ENCODE measurements at regions of chr2 and their contacts with region 1.

Region 1: DNA sequence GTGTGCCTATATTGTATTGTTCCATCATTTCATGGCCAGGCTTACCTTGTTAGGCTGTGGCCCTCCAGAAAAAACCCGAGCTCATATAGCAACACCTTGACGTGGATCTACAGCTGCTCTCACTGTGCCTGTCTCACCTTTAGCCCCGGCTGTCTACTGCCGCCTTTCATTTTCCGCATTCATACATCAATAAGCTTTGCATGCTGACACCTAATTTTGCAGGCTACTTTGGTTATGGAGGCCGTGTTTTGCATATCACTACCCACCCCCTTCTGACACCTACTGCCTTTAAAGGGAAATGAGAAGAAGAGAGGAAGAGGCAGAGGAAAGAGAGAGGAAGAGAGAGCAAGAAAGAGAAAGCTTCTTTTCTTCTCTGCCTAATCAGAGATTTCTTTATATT is 702.9 kb downstream of the BCL11A start:
- DNase-seq: no peak
- H3K4me3 Mint-ChIP-seq: no peak overlapping the region
- H3K27ac Mint-ChIP-seq: no peak overlapping the region
- H3K4me1 Mint-ChIP-seq: no peaks in the 10 kb centered on the region
- H3K27me3 Mint-ChIP-seq: no peaks in the 10 kb centered on the region
- CTCF ChIP-seq: no peak

Region 2: GRCh38 chr2:58532641-58533040 is 1317.9 kb before region 1 on chr2:
- CTCF ChIA-PET with region 1: interaction called, 10 read pairs
- POLR2A ChIA-PET with region 1: no interaction called
- intact Hi-C with region 1: no loop called
- DNase-seq: no peak
- H3K4me3 Mint-ChIP-seq: no peak overlapping the region
- H3K27ac Mint-ChIP-seq: no peak overlapping the region
- H3K4me1 Mint-ChIP-seq: no peaks in the 10 kb centered on the region
- H3K27me3 Mint-ChIP-seq: no peaks in the 10 kb centered on the region
- CTCF ChIP-seq: no peak

Region 3: GRCh38 chr2:59833941-59834340 is 16.6 kb before region 1 on chr2:
- CTCF ChIA-PET with region 1: no interaction called
- POLR2A ChIA-PET with region 1: no interaction called
- intact Hi-C with region 1: no loop called
- DNase-seq: no peak
- H3K4me3 Mint-ChIP-seq: no peak overlapping the region
- H3K27ac Mint-ChIP-seq: no peak overlapping the region
- H3K4me1 Mint-ChIP-seq: no peaks in the 10 kb centered on the region
- H3K27me3 Mint-ChIP-seq: no peaks in the 10 kb centered on the region
- CTCF ChIP-seq: no peak

Region 4: DNA sequence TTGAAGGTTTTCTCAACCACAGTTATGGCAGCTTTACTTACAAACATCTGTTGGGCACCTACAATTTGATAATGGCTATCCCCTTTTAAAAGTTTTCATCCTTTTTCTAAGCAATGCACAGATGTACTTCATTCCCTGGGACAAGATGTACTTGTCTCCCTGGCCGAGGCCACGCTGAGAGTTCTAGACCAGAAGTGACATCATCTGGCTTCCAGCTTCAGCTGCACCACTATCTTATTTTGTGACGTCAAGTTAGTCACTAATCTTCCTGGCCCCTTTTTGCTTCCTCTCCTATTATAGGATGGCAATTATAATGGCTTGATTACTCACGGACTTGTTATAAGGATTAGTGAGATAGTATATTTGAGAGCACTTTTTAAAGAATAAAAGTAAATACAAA is 316.5 kb after region 1 on chr2:
- CTCF ChIA-PET with region 1: no interaction called
- POLR2A ChIA-PET with region 1: no interaction called
- intact Hi-C with region 1: no loop called
- DNase-seq: no peak
- H3K4me3 Mint-ChIP-seq: no peak overlapping the region
- H3K27ac Mint-ChIP-seq: no peak overlapping the region
- H3K4me1 Mint-ChIP-seq: no peaks in the 10 kb centered on the region
- H3K27me3 Mint-ChIP-seq: no peaks in the 10 kb centered on the region
- CTCF ChIP-seq: no peak

Measured in MCF 10A (cell line).